ENCODE measurements at regions of chr19 and their contacts with region 1.

Region 1: DNA sequence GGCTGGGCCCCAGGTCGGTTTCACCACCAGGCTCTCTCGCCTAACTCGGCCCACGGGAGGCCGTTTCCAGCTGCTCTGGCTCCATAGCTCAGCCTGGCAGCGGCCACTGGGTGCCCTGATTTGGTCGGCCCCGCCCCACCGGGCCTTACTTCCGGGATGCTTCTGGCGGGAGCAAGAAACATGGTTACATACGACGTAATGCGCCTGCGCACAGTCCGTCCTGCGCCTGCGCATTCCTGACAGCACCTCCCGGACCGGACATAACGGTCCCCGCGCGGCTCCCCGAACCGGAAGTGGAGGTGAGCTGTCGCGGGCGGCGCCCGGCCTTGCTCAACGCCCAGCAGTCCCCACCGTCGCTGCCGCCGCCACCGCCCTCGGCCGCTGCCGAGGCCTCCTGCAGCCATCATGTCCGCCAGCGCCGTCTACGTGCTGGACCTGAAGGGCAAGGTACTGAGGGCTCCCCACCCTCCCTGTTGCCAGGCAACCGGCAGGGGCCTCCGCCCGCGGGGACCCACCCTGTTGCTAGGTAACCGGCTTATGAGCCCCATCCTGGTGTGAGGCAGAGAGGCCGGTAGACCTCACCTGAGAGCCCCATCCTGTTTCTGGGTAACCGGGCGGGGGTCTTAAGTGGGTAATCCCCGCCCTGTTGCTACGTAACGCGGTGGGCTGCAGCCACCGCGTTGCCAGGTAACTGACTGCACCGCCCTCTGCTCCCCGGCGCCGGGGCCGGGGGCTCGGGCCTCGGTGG is at the start of gene AP1M1:
- DNase-seq: peak; percentile 99
- ATAC-seq: peak; percentile 90
- H3K4me3 Mint-ChIP-seq: peak within 1 kb of the TSS; percentile 90
- H3K27ac Mint-ChIP-seq: peak within 1 kb of the TSS; percentile 97
- H3K4me1 Mint-ChIP-seq: peaks cover 41% of the 10 kb centered on the region
- H3K27me3 Mint-ChIP-seq: no peaks in the 10 kb centered on the region
- CTCF ChIP-seq: no peak
- total RNA-seq, gene AP1M1: 99.0 to 108 TPM

Region 2: DNA sequence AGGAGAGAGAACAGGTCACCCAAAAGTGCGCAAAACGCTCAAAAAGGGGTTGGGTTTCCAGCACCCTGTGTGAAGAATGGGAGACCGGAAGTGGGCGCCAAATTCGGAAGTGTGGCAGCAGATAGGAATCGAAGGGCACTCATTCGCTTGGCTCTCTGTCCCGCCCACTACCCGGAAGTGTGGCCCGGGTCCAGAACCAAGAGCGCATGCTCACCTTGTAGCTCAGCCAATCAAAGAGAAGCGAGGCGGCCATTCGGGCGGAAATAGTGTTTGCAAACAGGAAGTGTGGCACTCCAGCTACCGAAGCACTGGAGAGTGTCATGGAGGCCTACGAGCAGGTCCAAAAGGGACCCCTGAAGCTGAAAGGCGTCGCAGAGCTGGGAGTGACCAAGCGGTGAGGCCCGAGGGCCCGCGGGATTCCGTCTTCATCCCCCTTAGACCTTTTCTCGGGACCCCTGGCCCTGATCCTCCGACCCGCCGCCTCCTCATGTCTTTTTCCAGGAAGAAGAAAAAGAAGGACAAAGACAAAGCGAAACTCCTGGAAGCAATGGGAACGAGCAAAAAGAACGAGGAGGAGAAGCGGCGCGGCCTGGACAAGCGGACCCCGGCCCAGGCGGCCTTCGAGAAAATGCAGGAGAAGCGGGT is 12.6 kb before region 1 on chr19 and contains the start of gene FAM32A:
- CTCF ChIA-PET with region 1: interaction called, 17 read pairs
- POLR2A ChIA-PET with region 1: interaction called, 9 read pairs
- intact Hi-C with region 1: no loop called
- DNase-seq: peak; percentile 100
- ATAC-seq: peak; percentile 97
- H3K4me3 Mint-ChIP-seq: peak within 1 kb of the TSS; percentile 100
- H3K27ac Mint-ChIP-seq: peak within 1 kb of the TSS; percentile 95
- H3K4me1 Mint-ChIP-seq: peaks cover 22% of the 10 kb centered on the region
- H3K27me3 Mint-ChIP-seq: no peaks in the 10 kb centered on the region
- CTCF ChIP-seq: no peak
- total RNA-seq, gene FAM32A: 41.7 to 44.7 TPM

Region 3: DNA sequence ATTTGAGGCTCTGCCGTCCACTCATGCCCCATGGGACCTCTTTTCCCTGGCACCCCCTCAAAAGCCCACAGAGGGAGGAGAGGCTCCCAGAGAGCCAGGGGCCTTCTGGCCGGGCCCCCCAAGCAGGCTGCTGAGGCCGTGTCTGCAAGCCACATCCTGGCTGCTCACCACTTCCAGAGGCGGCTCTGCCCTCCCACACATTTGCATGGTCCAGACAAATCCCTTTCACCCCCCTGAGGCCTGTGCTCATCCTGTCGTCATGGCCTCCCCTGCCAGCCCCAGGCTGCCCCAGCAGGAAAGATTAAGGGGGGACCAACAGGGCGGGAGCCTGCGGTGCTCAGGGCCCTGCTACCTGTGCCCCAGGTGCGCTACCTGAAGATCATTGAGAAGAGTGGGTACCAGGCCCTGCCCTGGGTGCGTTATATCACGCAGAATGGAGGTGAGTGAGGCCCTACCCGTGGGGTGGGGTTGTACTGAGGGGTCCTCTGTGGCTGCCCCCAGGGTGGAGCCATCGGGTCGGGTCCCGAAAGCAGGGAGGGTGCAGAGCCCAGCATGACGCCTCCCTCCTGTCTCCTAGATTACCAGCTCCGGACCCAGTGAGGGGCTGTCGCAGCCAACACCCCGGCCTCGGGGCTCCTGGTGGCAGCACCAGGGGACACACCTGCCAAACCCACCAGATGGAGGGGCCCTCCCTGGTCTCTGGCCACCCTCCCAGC is 36.2 kb after region 1 on chr19:
- CTCF ChIA-PET with region 1: no interaction called
- POLR2A ChIA-PET with region 1: no interaction called
- intact Hi-C with region 1: no loop called
- DNase-seq: peak; percentile 33
- ATAC-seq: peak; percentile 60
- H3K4me3 Mint-ChIP-seq: no peak overlapping the region
- H3K27ac Mint-ChIP-seq: peak overlapping the region; percentile 73
- H3K4me1 Mint-ChIP-seq: peaks cover 46% of the 10 kb centered on the region
- H3K27me3 Mint-ChIP-seq: no peaks in the 10 kb centered on the region
- CTCF ChIP-seq: no peak

Region 4: GRCh38 chr19:16262618-16263017 is 64.8 kb after region 1 on chr19:
- CTCF ChIA-PET with region 1: no interaction called
- POLR2A ChIA-PET with region 1: no interaction called
- intact Hi-C with region 1: no loop called
- DNase-seq: no peak
- ATAC-seq: no peak
- H3K4me3 Mint-ChIP-seq: no peak overlapping the region
- H3K27ac Mint-ChIP-seq: no peak overlapping the region
- H3K4me1 Mint-ChIP-seq: peaks cover 41% of the 10 kb centered on the region
- H3K27me3 Mint-ChIP-seq: peaks cover 16% of the 10 kb centered on the region
- CTCF ChIP-seq: no peak

Measured in activated CD8-positive, alpha-beta T cell treated with anti-CD3 and anti-CD28 coated beads for 36 hours (primary cell).